ENCODE measurements at regions of chr7 and their contacts with region 1.

Region 1: DNA sequence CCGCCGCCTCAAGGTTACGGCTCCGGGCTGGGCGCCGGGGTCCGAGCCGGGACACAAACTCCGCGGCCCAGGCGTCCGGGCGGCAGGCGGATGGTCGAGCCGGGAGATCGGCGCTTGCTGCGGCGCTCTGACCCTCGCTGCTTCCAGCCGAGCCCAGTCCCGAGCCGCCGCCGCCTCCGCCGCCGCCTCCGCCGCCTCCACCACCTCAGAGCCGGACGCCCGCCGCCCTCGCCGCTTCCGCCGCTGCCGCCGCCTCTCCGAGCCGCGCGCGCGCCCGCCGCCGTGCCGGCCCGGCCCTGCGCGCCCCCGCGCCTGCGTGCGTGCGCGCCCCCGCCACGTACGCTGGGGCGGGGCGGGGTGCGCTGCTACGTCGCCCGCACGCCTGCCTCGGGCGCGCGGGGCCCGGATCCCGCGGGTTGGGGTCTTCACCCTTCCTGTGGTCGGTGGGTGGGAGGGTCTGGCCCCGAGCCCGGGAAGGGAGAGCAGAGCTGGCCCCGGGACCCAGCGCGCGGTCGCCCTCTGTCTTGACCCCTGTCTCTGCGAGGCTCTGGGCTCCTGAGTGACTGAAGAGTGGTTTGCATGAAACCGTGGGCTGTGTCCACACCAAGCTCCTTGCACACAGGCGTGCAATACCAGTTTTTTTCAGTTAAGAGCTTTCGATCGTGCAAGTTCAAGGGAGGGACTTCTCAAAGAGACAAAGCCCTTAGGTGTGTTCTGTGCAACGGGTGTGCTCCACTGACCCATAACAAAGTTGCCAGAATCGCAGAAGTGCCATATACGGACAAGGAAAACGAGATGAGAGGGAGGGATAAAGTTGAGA is at the start of gene SMURF1:
- DNase-seq: peak; percentile 74
- H3K4me3 ChIP-seq: peak within 1 kb of the TSS; percentile 97 to 100 (median 100)
- H3K27ac ChIP-seq: peak within 1 kb of the TSS; percentile 99 to 100 (median 100)
- H3K4me1 ChIP-seq: peaks cover 5 to 44% (median 21%) of the 10 kb centered on the region in 4 donors
- H3K27me3 ChIP-seq: no peaks in the 10 kb centered on the region
- CTCF ChIP-seq: no peak
- EP300 ChIP-seq: no peak
- POLR2A ChIP-seq: peak; percentile 70
- total RNA-seq, gene SMURF1: 25.3 to 47.5 (median 36.5) TPM

Region 2: DNA sequence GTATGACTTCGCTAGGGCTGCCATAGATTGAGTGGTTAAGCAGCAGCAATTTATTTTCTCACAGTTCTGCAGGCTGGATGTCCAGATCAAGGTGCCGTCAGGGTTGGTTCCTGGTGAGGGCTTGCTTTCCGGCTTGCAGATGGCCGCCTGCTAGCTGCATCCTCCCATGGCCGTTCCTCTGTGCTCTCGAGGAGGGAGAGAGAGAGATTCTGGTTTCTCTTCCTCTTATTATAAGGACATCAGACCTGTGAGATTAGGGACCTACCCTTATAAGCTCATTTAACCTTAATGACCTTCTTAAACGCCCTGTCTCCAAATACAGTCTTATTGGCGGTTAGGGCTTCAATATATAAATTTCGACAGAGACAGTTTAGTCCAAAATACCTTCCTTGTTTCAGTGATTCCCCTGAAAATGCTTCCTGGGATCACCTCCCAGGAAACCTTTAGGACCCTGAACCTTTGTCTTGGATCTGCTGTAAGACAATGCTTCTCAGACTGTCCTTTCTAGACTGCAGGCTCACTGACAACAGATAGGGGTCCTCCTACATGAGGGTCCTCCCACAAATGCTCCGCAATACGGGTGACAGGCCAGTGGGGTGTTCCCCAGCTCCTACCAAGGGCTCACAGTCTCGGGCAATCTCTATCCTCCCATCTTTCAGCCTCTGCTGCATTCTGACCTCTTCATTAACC is 660.6 kb before region 1 on chr7:
- in situ Hi-C with region 1: no loop called
- intact Hi-C with region 1: no loop called
- DNase-seq: no peak
- H3K4me3 ChIP-seq: no peak overlapping the region
- H3K27ac ChIP-seq: no peak overlapping the region
- H3K4me1 ChIP-seq: no peaks in the 10 kb centered on the region
- H3K27me3 ChIP-seq: no peaks in the 10 kb centered on the region
- CTCF ChIP-seq: no peak
- EP300 ChIP-seq: no peak
- POLR2A ChIP-seq: no peak

Region 3: DNA sequence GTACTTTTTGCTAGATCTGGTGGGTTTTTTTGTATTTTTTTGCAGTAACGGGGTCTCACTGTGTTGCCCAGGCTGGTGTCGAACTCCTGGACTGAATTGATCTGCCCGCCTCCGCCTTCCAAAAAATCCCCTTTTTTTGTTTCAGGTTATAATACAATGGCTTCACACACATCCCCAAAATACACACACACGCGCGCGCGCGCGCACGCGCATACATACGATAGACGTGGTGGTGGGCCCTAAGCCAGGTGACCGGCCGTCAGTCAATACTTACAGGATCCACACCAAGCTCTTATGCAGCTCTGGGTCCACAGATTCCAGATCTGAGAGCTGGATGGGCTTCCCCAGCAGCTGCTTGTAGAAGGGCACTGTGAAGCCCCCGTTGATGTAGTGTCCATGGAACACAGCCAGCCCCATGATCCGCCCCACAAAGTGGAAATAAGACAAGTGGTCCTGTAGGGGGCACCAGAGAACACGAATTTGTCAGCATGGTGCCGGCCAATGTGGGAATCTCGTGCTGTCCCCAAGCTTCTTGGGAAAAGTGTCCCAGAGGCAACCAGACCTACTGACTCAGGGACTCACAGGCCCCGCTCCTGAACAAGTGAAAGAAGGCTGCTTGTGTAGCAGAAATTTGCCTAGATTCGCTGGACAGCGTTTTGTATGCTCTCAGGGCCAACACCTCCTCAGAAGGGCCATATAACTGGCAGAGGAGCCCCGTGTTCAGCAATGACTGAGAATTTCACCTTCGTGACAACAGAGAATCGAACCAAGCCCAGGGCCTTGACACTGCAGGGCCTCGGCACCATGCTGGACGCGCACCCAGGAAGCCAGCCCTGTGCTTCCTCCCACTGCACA is 103.7 kb before region 1 on chr7:
- in situ Hi-C with region 1: loop called in 1 of 4 experiments (anchors 10 kb)
- intact Hi-C with region 1: no loop called
- DNase-seq: peak; percentile 85
- H3K4me3 ChIP-seq: no peak overlapping the region
- H3K27ac ChIP-seq: peak overlapping the region; percentile 54 to 77 (median 71)
- H3K4me1 ChIP-seq: peaks cover 10 to 33% (median 20%) of the 10 kb centered on the region in 4 donors
- H3K27me3 ChIP-seq: no peaks in the 10 kb centered on the region
- CTCF ChIP-seq: peak; percentile 72 to 89 (median 79)
- EP300 ChIP-seq: no peak
- POLR2A ChIP-seq: no peak